ENCODE measurements at regions of chr12 and their contacts with region 1.

Region 1: DNA sequence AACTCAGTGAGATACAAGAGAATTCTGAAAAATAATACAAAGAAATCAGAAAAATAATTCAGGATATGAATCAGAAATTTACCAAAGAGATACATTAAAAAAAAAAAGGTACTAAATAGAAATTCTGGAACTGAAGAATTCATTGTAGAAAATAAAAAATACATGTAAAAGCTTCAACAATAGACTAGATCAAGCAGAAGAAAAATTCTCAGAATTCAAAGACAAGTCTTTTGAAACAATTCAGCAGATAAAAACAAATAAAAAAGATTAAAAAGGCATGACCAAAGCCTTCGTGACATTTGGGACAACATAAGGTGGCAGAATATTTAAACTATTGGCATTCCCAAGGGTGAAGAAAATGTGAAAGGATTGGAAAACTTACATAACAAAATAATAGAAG is 133.1 kb upstream of the CNOT2 start:
- DNase-seq: no peak
- H3K4me3 ChIP-seq: no peak overlapping the region
- H3K27ac ChIP-seq: no peak overlapping the region
- H3K4me1 ChIP-seq: no peaks in the 10 kb centered on the region
- H3K27me3 ChIP-seq: no peaks in the 10 kb centered on the region
- CTCF ChIP-seq: no peak
- EP300 ChIP-seq: no peak
- POLR2A ChIP-seq: no peak

Region 2: DNA sequence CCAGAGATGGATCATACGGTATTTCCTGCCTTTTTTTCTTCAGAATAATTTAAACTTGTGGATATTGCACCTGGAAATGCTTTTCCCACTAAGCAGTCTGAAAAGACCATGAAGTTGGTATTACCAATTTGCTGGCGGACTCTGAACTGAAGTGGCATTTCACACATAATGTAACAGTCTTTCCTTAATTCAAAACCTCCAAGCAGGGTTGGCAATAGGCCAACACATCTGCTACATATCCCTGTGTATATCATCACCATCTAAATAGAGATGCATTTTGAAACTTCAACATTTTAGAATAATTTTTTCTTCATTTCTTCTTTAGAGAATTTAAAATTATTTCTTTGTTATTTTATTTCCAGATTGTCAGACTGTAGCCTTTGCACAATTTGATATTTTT is 947.2 kb after region 1 on chr12:
- intact Hi-C with region 1: loop called in 1 of 4 experiments (anchors 5 kb)
- DNase-seq: no peak
- H3K4me3 ChIP-seq: no peak overlapping the region
- H3K27ac ChIP-seq: no peak overlapping the region
- H3K4me1 ChIP-seq: no peaks in the 10 kb centered on the region
- H3K27me3 ChIP-seq: no peaks in the 10 kb centered on the region
- CTCF ChIP-seq: no peak
- EP300 ChIP-seq: no peak
- POLR2A ChIP-seq: no peak

Measured in ovary (tissue), 10 donors.